Activated naive CD4-positive, alpha-beta T cell treated with anti-CD3 and anti-CD28 coated beads for 36 hours (primary cell): ENCODE measurements at regions of chr11 and their contacts with region 1.

Region 1: GRCh38 chr11:61639816-61640443 is 40.3 kb upstream of the DAGLA start:
- DNase-seq: no peak
- H3K4me3 Mint-ChIP-seq: no peak overlapping the region
- H3K27ac Mint-ChIP-seq: no peak overlapping the region
- H3K4me1 Mint-ChIP-seq: no peaks in the 10 kb centered on the region
- H3K27me3 Mint-ChIP-seq: no peaks in the 10 kb centered on the region

Region 2: DNA sequence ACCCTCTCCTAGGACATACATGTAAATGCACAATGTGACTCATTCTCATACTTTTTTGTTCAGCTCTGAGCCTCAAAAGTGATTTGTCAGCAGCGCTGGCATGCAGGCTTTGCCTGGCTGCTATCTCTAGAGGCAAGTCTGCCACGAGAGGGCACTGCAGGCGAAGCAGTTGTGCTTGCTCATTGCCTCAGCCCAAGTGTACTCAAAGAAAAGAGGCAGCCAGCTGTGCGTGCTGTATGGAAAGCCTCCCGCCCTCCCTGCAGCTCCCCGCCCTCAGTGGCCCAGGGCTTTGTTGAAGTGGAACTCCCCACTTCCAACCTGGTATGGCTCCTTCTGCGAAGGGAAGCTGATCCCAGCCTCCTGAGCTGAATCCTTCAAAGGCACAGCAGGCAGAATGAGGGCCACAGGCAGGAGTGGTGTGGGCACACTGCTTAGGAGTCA is 193.7 kb before region 1 on chr11:
- CTCF ChIA-PET with region 1: interaction called, 5 read pairs
- intact Hi-C with region 1: loop called (anchors 1 kb)
- DNase-seq: peak; percentile 96
- H3K4me3 Mint-ChIP-seq: no peak overlapping the region
- H3K27ac Mint-ChIP-seq: peak overlapping the region; percentile 38
- H3K4me1 Mint-ChIP-seq: peaks cover 27% of the 10 kb centered on the region
- H3K27me3 Mint-ChIP-seq: no peaks in the 10 kb centered on the region

Region 3: GRCh38 chr11:61477727-61478148 is 162.2 kb before region 1 on chr11:
- CTCF ChIA-PET with region 1: interaction called, 19 read pairs
- intact Hi-C with region 1: no loop called
- DNase-seq: peak; percentile 57
- H3K4me3 Mint-ChIP-seq: no peak overlapping the region
- H3K27ac Mint-ChIP-seq: no peak overlapping the region
- H3K4me1 Mint-ChIP-seq: peaks cover 10% of the 10 kb centered on the region
- H3K27me3 Mint-ChIP-seq: peaks cover 2% of the 10 kb centered on the region

Region 4: GRCh38 chr11:61532139-61533038 is 107.5 kb before region 1 on chr11:
- CTCF ChIA-PET with region 1: no interaction called
- intact Hi-C with region 1: loop called (anchors 5 kb)
- DNase-seq: peak; percentile 59
- H3K4me3 Mint-ChIP-seq: no peak overlapping the region
- H3K27ac Mint-ChIP-seq: no peak overlapping the region
- H3K4me1 Mint-ChIP-seq: no peaks in the 10 kb centered on the region
- H3K27me3 Mint-ChIP-seq: peaks cover 5% of the 10 kb centered on the region

Region 5: GRCh38 chr11:61567286-61568061 is 72.5 kb before region 1 on chr11:
- CTCF ChIA-PET with region 1: interaction called, 10 read pairs
- intact Hi-C with region 1: no loop called
- DNase-seq: peak; percentile 87
- H3K4me3 Mint-ChIP-seq: no peak overlapping the region
- H3K27ac Mint-ChIP-seq: no peak overlapping the region
- H3K4me1 Mint-ChIP-seq: peaks cover 1% of the 10 kb centered on the region
- H3K27me3 Mint-ChIP-seq: peaks cover 43% of the 10 kb centered on the region

Region 6: DNA sequence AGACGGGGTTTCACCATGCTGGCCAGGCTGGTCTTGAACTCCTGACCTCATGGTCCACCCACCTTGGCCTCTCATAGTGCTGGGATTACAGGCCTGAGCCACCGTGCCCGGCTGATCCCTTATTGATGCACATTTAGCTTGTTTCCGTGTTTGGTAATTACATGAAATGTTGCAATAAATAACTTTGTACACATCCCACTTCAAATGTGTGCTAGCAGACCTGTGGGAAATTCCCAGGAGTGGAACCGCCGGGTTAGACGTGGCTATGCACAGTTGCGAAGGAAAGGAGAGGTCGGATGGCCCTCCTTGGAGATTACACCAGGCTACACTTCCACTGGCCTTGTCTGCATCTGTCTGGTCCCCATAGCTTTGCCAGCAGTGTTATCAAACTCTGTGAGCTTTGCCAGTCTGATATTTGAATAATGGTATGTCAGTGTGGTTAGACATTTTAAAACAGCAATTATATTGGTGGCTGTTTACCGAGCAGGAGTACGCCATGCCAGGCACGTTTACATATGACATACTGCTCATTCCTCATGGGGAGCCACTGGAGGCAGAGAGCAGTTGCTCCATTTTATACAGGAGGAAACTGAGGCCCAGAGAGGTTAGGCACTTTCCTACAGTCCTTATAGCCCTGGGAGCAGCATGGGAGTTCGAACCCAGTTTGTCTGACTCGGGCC is 31.9 kb before region 1 on chr11:
- CTCF ChIA-PET with region 1: no interaction called
- intact Hi-C with region 1: no loop called
- DNase-seq: no peak
- H3K4me3 Mint-ChIP-seq: no peak overlapping the region
- H3K27ac Mint-ChIP-seq: no peak overlapping the region
- H3K4me1 Mint-ChIP-seq: no peaks in the 10 kb centered on the region
- H3K27me3 Mint-ChIP-seq: peaks cover 8% of the 10 kb centered on the region

Region 7: GRCh38 chr11:61627567-61628445 is 12.1 kb before region 1 on chr11:
- CTCF ChIA-PET with region 1: interaction called, 10 read pairs
- intact Hi-C with region 1: no loop called
- DNase-seq: peak; percentile 68
- H3K4me3 Mint-ChIP-seq: no peak overlapping the region
- H3K27ac Mint-ChIP-seq: no peak overlapping the region
- H3K4me1 Mint-ChIP-seq: no peaks in the 10 kb centered on the region
- H3K27me3 Mint-ChIP-seq: peaks cover 2% of the 10 kb centered on the region

Region 8: DNA sequence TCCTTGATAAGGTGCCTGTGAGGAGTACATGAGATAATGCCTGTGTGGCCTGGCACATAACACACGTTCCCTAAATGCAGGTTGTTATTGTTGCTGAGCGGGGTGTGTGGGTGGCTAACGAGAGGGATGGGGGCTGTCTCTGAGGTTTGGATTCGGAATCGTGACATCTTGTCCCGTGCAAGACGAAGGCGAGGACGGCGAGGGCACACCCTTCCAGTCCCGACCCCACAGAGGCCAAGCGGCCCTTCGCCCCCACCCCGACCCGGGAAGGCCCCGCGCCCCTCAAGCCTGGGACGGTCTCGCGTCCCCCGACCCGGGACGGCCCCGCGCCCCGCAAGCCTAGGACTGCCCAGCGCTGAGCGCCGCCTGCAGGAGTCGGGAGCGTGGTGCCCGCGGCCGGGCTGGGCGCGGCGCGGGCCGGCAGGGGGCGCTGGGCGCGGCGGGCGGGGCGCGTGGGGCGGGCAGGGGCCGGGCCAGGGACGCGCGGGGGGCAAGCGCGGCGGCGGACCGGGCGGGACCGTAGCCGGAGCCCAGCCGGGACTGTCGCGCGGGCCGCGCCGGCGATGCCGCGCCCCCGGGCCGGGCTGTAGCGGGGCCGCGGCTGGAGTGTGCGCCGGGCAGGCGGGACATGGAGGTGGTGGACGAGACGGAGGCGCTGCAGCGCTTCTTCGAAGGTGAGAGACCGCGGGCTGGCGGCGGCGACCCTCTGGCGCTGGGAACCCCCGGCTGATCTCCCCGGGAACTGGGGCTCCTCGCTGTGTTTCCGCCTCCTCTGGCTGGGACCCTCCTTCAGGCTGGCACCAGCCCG is 112.4 kb after region 1 on chr11 and contains the start of gene MYRF:
- CTCF ChIA-PET with region 1: no interaction called
- intact Hi-C with region 1: no loop called
- DNase-seq: peak; percentile 49
- H3K4me3 Mint-ChIP-seq: peak within 1 kb of the TSS; percentile 29
- H3K27ac Mint-ChIP-seq: no peak within 1 kb of the TSS
- H3K4me1 Mint-ChIP-seq: peaks cover 13% of the 10 kb centered on the region
- H3K27me3 Mint-ChIP-seq: peaks cover 29% of the 10 kb centered on the region
- total RNA-seq, gene MYRF: 0.27 to 0.48 TPM